ENCODE measurements at regions of chr5 and their contacts with region 1.

Region 1: DNA sequence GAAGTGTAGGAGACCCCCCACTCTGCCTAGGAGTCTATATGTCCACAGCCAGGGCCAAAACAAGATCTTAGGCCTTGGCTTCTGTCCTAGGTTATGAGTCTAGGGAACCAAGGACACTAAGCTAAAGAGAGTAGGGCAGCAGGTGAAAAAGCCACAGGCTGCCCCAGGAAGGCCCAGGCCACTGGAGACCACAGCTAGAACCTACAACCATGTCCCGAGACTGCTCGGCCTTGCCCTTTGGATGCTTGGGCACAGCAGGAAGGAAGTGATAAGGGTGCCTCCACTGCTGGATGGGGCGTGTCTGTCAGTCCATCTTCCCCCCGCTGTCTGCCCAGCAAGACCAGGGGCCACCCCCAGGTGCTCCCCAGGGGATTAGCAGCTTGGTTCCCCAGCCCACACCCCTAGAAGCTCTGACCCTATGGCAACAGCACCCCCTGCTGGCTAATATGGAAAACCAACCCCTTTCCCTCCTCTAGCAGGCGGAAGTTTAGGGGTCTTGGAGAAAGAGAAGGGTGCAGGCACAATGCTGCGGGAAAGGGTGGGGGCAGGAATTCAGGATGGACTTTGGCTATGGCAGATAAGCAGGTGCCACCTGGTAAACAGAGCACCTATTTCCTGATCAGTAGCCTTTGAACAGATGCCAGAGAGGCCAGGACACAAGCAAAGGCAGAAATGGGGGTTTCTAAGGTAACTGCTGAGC is 10.5 kb upstream of the IRF1 start:
- DNase-seq: peak; percentile 12
- H3K4me3 ChIP-seq: no peak overlapping the region
- H3K27ac ChIP-seq: peak overlapping the region; percentile 99
- H3K4me1 ChIP-seq: peaks cover 75% of the 10 kb centered on the region
- H3K27me3 ChIP-seq: no peaks in the 10 kb centered on the region
- CTCF ChIP-seq: peak; percentile 91

Region 2: DNA sequence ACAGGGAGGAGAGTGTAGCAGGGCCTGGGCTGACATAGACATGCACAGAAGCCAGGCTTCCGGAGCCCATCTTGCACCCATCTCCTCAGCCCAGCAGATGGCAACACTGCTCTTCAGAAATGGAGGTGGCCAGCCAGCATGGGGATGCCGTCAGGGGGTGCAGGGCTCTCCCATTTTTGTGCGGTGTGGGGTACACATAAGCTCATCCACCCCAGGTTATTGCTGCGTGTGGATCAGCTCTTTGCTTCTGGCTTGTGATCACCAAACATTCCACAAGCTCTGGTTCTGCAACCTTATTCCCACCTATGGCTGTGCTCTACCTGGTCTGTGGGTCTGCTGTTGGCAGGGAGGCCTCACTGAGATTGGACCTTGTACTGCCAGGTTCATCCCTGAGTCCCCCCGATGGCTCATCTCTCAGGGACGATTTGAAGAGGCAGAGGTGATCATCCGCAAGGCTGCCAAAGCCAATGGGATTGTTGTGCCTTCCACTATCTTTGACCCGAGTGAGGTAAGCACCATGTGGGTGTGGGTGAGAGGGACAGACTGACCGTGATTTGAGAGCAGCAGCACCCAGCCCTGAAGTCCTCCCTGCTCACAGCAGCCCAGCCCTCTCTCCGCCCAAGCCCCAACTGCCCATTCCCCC is 114.3 kb before region 1 on chr5:
- intact Hi-C with region 1: loop called (anchors 2 kb)
- DNase-seq: peak; percentile 71
- H3K4me3 ChIP-seq: peak overlapping the region; percentile 18
- H3K27ac ChIP-seq: peak overlapping the region; percentile 92
- H3K4me1 ChIP-seq: peaks cover 68% of the 10 kb centered on the region
- H3K27me3 ChIP-seq: no peaks in the 10 kb centered on the region
- CTCF ChIP-seq: peak; percentile 90

Region 3: DNA sequence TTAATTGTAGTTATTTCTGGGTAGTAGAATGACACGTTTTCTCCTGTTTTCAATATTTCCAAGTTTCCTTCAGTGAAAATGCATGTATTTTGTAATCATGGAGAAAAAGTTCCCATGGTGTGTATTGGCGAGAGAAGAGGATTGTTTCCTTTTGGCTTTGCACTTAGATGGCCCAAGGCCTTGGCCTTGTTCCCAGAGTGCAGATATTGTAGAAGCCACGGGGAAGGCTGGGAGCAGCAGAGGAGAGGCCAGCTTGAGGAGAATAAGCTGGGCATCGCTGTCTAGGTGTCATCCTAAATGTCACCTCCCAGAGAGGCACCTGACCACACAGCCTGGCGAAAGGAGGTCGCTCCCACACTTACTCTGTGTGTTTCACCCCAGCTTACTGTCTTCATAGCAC is 54.4 kb before region 1 on chr5:
- intact Hi-C with region 1: no loop called
- DNase-seq: peak; percentile 76
- H3K4me3 ChIP-seq: no peak overlapping the region
- H3K27ac ChIP-seq: peak overlapping the region; percentile 74
- H3K4me1 ChIP-seq: peaks cover 73% of the 10 kb centered on the region
- H3K27me3 ChIP-seq: no peaks in the 10 kb centered on the region
- CTCF ChIP-seq: peak; percentile 10

Region 4: GRCh38 chr5:132546108-132546507 is 45.0 kb after region 1 on chr5:
- intact Hi-C with region 1: no loop called
- DNase-seq: no peak
- H3K4me3 ChIP-seq: no peak overlapping the region
- H3K27ac ChIP-seq: no peak overlapping the region
- H3K4me1 ChIP-seq: no peaks in the 10 kb centered on the region
- H3K27me3 ChIP-seq: no peaks in the 10 kb centered on the region
- CTCF ChIP-seq: no peak

Measured in left ventricle myocardium inferior (tissue), 1 donor.